Activated CD4-positive, alpha-beta memory T cell treated with anti-CD3 and anti-CD28 coated beads, Interleukin-2, amount 10 ng/mL, durations not matched to agents 7 days and 5 days (primary cell): ENCODE measurements at regions of chr1 and their contacts with region 1.

Region 1: GRCh38 chr1:110766025-110766647 is 91.4 kb upstream of the KCNA3 start:
- DNase-seq: peak; percentile 66
- H3K4me3 Mint-ChIP-seq: no peak overlapping the region
- H3K27ac Mint-ChIP-seq: no peak overlapping the region
- H3K4me1 Mint-ChIP-seq: peaks cover 9% of the 10 kb centered on the region
- H3K27me3 Mint-ChIP-seq: peaks cover 19% of the 10 kb centered on the region

Region 2: DNA sequence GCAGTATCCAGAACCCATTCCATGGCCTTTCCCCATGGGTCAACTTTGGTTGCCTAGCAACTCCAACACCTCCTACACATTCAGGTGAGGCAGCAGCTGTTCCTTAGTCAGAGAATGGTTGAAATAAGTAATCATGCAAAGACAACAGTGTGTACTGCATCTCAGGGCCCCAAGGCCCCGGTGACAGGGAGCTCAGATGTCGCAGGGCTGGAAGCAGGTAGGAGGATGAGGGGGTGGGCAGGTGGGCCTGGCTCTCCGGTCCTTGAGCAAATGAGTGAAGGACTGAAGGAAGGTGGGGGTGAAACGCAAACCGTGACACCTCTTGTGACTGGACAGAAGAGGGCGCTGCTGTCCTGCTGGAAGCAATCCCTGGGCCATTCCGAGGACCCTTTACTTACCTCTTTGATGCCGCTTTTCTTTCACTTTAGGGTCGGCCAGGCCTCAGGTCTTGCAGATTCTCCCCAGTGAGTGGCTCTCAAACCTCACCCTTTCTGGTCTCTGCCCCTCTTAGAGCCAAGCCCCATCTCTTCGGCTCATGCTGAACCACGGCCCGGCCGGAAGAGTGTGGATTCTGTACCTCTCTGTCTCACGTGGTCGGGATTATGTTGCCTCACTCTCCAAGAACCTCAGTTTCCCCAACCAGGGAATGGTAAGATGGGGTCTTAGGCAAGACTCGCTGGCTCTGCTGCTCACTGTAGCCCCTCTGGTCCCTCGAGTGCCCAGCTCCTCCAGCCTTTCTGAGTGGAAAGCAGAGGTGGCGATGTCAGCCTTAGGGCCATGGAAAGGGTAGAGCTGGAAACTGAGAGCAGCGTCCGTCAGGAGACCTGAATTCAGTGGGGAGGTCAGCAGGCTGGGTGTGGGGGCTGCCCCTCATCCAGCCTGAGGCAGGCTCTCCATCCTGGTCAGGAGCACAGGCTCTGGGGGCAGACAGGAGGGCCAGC is 241.6 kb before region 1 on chr1:
- CTCF ChIA-PET with region 1: interaction called, 18 read pairs
- POLR2A ChIA-PET with region 1: no interaction called
- DNase-seq: peak; percentile 62
- H3K4me3 Mint-ChIP-seq: no peak overlapping the region
- H3K27ac Mint-ChIP-seq: no peak overlapping the region
- H3K4me1 Mint-ChIP-seq: no peaks in the 10 kb centered on the region
- H3K27me3 Mint-ChIP-seq: peaks cover 53% of the 10 kb centered on the region

Region 3: GRCh38 chr1:110554871-110555801 is 211.0 kb before region 1 on chr1:
- CTCF ChIA-PET with region 1: interaction called, 28 read pairs
- POLR2A ChIA-PET with region 1: no interaction called
- DNase-seq: peak; percentile 54
- H3K4me3 Mint-ChIP-seq: no peak overlapping the region
- H3K27ac Mint-ChIP-seq: no peak overlapping the region
- H3K4me1 Mint-ChIP-seq: peaks cover 12% of the 10 kb centered on the region
- H3K27me3 Mint-ChIP-seq: peaks cover 62% of the 10 kb centered on the region

Region 4: DNA sequence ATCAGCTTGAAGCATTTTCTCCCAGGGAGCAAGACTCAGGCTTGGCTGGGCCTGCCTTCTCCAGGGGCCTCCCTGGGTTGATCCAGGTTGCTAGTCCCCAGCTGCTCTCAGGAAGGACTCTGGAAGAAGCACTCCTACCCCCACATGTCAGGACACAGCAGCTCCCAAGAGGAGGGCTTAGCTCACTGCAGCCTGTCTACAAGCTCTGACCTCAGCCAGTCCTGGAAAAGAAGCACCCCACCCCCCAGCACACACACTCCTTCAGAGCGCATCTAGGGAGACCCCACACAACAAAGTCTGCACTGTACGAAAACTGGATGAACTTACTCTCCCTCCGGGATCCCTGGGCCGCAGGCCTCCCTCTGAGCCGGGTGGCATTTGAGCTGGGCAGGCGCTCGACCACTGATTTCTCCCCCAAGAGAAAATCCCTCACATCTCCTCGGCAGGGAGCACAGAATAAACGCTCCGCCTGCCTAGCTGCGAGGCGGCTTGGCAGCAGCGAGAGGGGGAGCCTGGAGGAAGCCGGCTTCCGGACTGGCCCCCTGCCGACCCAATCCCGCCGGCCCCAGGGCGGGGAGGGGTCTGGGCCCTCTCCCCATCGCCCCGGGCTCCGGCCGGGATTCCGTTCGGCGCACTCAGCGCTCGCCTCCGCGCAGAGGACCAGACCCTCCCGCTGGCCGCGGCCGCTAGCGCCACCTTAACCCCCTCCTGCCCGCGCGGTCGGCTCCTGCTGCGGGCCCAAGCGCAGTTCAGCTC is 160.1 kb before region 1 on chr1 and contains the start of gene KCNA2:
- CTCF ChIA-PET with region 1: interaction called, 13 read pairs
- POLR2A ChIA-PET with region 1: interaction called, 5 read pairs
- DNase-seq: peak; percentile 15
- H3K4me3 Mint-ChIP-seq: peak within 1 kb of the TSS; percentile 68
- H3K27ac Mint-ChIP-seq: no peak within 1 kb of the TSS
- H3K4me1 Mint-ChIP-seq: peaks cover 41% of the 10 kb centered on the region
- H3K27me3 Mint-ChIP-seq: peaks cover 43% of the 10 kb centered on the region
- total RNA-seq, gene KCNA2: 5.9 to 6.6 TPM

Region 5: DNA sequence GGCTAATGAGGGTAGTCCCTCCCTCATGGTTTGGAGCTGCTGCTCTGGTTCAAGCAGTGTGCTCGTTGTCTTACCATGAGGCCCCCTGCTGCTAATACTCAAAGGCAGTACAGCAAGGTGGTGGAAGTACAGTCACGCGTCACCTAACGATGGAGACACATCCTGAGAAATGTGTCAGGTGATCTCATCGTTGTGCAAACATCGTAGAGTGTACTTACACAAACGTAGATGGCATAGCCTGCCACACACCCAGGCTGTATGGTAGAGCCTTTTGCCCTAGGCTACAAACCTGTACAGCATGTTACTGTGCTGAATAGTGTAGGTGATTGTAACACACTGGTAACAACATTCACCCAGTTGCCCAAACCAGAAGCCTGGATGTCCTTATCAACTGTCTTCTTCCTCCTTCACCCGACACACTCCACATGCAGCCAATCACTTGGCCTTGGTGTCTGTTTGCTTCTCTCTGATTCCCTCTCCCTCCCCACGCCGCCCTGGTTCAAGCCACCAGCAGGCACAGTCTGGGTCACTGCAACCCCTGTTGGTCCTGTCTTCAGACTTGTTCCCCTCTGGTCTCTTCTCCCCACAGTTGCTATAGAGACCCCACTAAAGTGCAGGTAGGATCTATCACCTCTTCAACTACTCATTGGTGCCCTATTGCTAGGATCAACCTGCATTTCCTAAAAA is 153.9 kb before region 1 on chr1:
- CTCF ChIA-PET with region 1: interaction called, 26 read pairs
- POLR2A ChIA-PET with region 1: interaction called, 66 read pairs
- DNase-seq: peak; percentile 11
- H3K4me3 Mint-ChIP-seq: no peak overlapping the region
- H3K27ac Mint-ChIP-seq: no peak overlapping the region
- H3K4me1 Mint-ChIP-seq: peaks cover 58% of the 10 kb centered on the region
- H3K27me3 Mint-ChIP-seq: peaks cover 22% of the 10 kb centered on the region

Region 6: GRCh38 chr1:110630839-110631663 is 135.1 kb before region 1 on chr1:
- CTCF ChIA-PET with region 1: interaction called, 26 read pairs
- POLR2A ChIA-PET with region 1: interaction called, 5 read pairs
- DNase-seq: peak; percentile 92
- H3K4me3 Mint-ChIP-seq: no peak overlapping the region
- H3K27ac Mint-ChIP-seq: no peak overlapping the region
- H3K4me1 Mint-ChIP-seq: peaks cover 68% of the 10 kb centered on the region
- H3K27me3 Mint-ChIP-seq: no peaks in the 10 kb centered on the region

Region 7: DNA sequence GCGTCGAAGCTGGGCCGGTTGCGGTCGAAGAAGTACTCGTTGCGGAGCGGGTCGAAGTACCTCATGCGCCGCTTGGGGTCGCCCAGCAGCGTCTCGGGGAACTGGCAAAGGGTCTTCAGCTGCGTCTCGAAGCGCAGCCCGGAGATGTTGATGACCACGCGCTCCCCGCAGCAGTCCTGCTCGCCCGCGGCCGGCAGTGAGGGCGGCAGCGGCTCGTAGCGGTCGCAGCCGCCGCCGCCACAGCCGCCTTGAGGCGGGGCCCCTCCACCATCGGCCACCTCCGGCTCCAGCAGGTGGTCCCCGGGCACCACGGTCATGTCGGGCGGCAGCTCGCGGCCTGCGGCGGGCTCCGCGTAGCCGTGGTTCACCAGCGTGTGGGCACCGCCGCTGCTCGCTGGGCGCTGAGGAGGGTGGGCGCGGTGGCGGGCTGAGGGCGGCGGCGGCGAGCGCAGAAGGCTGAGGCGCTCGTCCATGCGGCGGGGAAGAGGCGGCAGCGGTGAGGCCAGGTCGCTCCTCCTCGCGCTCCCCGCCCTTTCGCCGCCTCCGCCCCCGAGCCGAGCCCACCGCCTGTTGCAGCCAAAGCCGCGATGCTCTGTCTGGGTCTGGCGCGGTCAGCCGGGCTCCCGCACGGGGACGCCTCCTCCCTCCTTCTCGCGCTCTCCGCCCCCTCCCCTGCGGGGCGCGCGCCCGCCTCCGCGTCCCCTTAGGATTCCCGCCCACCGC is 91.6 kb before region 1 on chr1 and contains the start of gene KCNA3:
- CTCF ChIA-PET with region 1: interaction called, 21 read pairs
- POLR2A ChIA-PET with region 1: interaction called, 23 read pairs
- DNase-seq: peak; percentile 74
- H3K4me3 Mint-ChIP-seq: peak within 1 kb of the TSS; percentile 100
- H3K27ac Mint-ChIP-seq: peak within 1 kb of the TSS; percentile 89
- H3K4me1 Mint-ChIP-seq: peaks cover 28% of the 10 kb centered on the region
- H3K27me3 Mint-ChIP-seq: no peaks in the 10 kb centered on the region
- total RNA-seq, gene KCNA3: 84.9 to 86.2 TPM

Region 8: GRCh38 chr1:110916669-110917306 is 150.7 kb after region 1 on chr1:
- CTCF ChIA-PET with region 1: no interaction called
- POLR2A ChIA-PET with region 1: no interaction called
- DNase-seq: peak; percentile 62
- H3K4me3 Mint-ChIP-seq: peak overlapping the region; percentile 49
- H3K27ac Mint-ChIP-seq: peak overlapping the region; percentile 70
- H3K4me1 Mint-ChIP-seq: peaks cover 20% of the 10 kb centered on the region
- H3K27me3 Mint-ChIP-seq: peaks cover 11% of the 10 kb centered on the region